ENCODE measurements at regions of chr18 and their contacts with region 1.

Region 1: GRCh38 chr18:31197676-31198075 is 35.0 kb upstream of the DSC1 start:
- DNase-seq: no peak
- ATAC-seq: no peak
- H3K4me3 ChIP-seq: no peak overlapping the region
- H3K27ac ChIP-seq: no peak overlapping the region
- H3K4me1 ChIP-seq: no peaks in the 10 kb centered on the region
- H3K27me3 ChIP-seq: no peaks in the 10 kb centered on the region
- CTCF ChIP-seq: no peak
- POLR2A ChIP-seq: no peak

Region 2: GRCh38 chr18:31099450-31100230 is 98.0 kb before region 1 on chr18:
- in situ Hi-C with region 1: loop called in 1 of 4 experiments (anchors 25 kb)
- intact Hi-C with region 1: no loop called
- DNase-seq: no peak
- ATAC-seq: no peak
- H3K4me3 ChIP-seq: no peak overlapping the region
- H3K27ac ChIP-seq: no peak overlapping the region
- H3K4me1 ChIP-seq: no peaks in the 10 kb centered on the region
- H3K27me3 ChIP-seq: peaks cover 0 to 15% (median 6%) of the 10 kb centered on the region in 3 donors
- CTCF ChIP-seq: no peak
- POLR2A ChIP-seq: no peak